CD8-positive, alpha-beta T cell (primary cell): ENCODE measurements at regions of chr15 and their contacts with region 1.

Region 1: GRCh38 chr15:75842722-75843551 is at the start of gene UBE2Q2:
- DNase-seq: peak; percentile 13 to 86 (median 75)
- ATAC-seq: peak; percentile 62
- H3K4me3 ChIP-seq: peak within 1 kb of the TSS; percentile 72 to 73
- H3K4me3 Mint-ChIP-seq: peak within 1 kb of the TSS; percentile 90
- H3K27ac ChIP-seq: peak within 1 kb of the TSS; percentile 58 to 59
- H3K27ac Mint-ChIP-seq: peak within 1 kb of the TSS; percentile 93
- H3K4me1 ChIP-seq: peaks cover 26% of the 10 kb centered on the region
- H3K4me1 Mint-ChIP-seq: peaks cover 45% of the 10 kb centered on the region
- H3K27me3 ChIP-seq: no peaks in the 10 kb centered on the region
- H3K27me3 Mint-ChIP-seq: no peaks in the 10 kb centered on the region
- CTCF ChIP-seq: no peak
- total RNA-seq, gene UBE2Q2: 28.5 to 30.4 TPM

Region 2: GRCh38 chr15:74956648-74957300 is 886.2 kb before region 1 on chr15 and contains the start of gene RPP25:
- CTCF ChIA-PET with region 1: no interaction called
- POLR2A ChIA-PET with region 1: no interaction called
- intact Hi-C with region 1: loop called in 1 of 2 experiments (anchors 10 kb)
- DNase-seq: peak; percentile 22 to 78 (median 66)
- ATAC-seq: peak; percentile 89
- H3K4me3 ChIP-seq: peak within 1 kb of the TSS; percentile 56 to 65
- H3K4me3 Mint-ChIP-seq: peak within 1 kb of the TSS; percentile 81
- H3K27ac ChIP-seq: no peak within 1 kb of the TSS
- H3K27ac Mint-ChIP-seq: no peak within 1 kb of the TSS
- H3K4me1 ChIP-seq: peaks cover 26% of the 10 kb centered on the region
- H3K4me1 Mint-ChIP-seq: peaks cover 30% of the 10 kb centered on the region
- H3K27me3 ChIP-seq: peaks cover 17 to 28% of the 10 kb centered on the region in 2 experiments
- H3K27me3 Mint-ChIP-seq: peaks cover 25% of the 10 kb centered on the region
- CTCF ChIP-seq: no peak
- total RNA-seq, gene RPP25: 0.22 to 0.28 TPM

Region 3: GRCh38 chr15:75738647-75739331 is 104.1 kb before region 1 on chr15:
- CTCF ChIA-PET with region 1: no interaction called
- POLR2A ChIA-PET with region 1: interaction called, 10 read pairs
- intact Hi-C with region 1: loop called (anchors 1 to 5 kb)
- DNase-seq: peak; percentile 70 to 92 (median 89)
- ATAC-seq: peak; percentile 91
- H3K4me3 ChIP-seq: peak overlapping the region; percentile 67 to 79
- H3K4me3 Mint-ChIP-seq: peak overlapping the region; percentile 84
- H3K27ac ChIP-seq: peak overlapping the region in 1 of 2 experiments; percentile 51
- H3K27ac Mint-ChIP-seq: peak overlapping the region; percentile 70
- H3K4me1 ChIP-seq: peaks cover 14% of the 10 kb centered on the region
- H3K4me1 Mint-ChIP-seq: peaks cover 14% of the 10 kb centered on the region
- H3K27me3 ChIP-seq: peaks cover 0 to 4% of the 10 kb centered on the region in 2 experiments
- H3K27me3 Mint-ChIP-seq: peaks cover 3% of the 10 kb centered on the region
- CTCF ChIP-seq: no peak

Region 4: DNA sequence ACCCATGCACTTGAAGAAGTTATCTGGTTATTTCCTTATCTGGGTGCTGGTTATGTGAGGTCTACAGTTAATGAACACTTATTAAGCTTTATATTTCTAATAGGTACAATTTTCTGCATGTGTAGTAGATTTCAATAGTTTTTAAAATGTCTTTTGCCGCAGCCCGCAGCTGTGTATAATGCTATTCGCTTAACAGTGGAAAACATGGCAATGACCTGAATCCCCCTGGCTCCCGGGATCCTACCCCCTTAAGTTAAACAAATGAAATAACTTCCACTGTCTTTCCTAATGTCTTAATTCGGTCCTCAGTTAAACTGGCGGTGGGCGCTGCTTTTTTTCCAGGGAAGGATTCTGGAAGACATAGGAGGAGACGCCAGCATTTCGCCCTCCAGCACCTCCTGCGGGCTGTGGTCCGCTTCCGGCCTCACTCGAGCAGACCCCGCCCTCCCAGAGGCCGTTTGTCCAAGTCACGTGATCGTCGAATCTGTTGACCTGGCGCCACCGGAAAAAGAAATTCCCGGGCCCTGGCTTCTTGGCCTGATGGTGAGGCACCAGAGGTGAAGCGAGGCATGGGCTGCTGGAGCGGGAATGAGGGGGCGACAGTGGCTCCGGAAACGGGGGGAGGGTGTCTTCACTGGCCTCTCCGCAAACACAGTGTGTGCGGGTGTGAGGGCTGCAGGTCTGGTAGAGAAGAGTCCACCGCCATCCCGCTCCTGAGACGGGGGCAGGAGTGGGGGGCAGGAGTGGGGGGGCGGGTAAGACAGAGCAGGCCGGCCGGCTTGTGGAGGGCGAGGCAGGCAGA is 84.7 kb before region 1 on chr15:
- CTCF ChIA-PET with region 1: no interaction called
- POLR2A ChIA-PET with region 1: no interaction called
- intact Hi-C with region 1: no loop called
- DNase-seq: peak in 8 of 9 experiments; percentile 29 to 80 (median 52)
- ATAC-seq: peak; percentile 66
- H3K4me3 ChIP-seq: peak overlapping the region; percentile 61 to 73
- H3K4me3 Mint-ChIP-seq: peak overlapping the region; percentile 82
- H3K27ac ChIP-seq: peak overlapping the region; percentile 26 to 58
- H3K27ac Mint-ChIP-seq: peak overlapping the region; percentile 67
- H3K4me1 ChIP-seq: no peaks in the 10 kb centered on the region
- H3K4me1 Mint-ChIP-seq: peaks cover 17% of the 10 kb centered on the region
- H3K27me3 ChIP-seq: no peaks in the 10 kb centered on the region
- H3K27me3 Mint-ChIP-seq: no peaks in the 10 kb centered on the region
- CTCF ChIP-seq: no peak

Region 5: DNA sequence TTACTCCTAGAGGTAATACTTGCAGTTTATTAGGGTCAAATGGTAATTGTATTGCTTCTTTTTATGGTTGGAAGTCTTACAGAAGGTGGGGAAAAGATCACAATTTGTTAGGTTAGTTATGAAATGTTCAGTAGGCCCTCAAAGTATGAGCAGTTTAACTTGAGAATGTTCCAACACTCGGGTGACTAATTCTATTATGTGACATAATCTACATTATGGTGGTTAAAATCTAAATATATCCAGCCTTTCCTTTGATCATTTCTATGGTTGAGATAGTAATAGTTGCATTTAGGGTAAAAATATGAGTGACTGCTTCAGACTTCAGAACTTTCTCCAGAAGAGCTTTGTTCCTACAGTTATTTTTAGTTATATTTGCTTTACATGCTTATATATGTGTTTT is 41.1 kb after region 1 on chr15:
- CTCF ChIA-PET with region 1: no interaction called
- POLR2A ChIA-PET with region 1: no interaction called
- intact Hi-C with region 1: loop called in 1 of 2 experiments (anchors 5 kb)
- DNase-seq: no peak
- ATAC-seq: no peak
- H3K4me3 ChIP-seq: no peak overlapping the region
- H3K4me3 Mint-ChIP-seq: no peak overlapping the region
- H3K27ac ChIP-seq: no peak overlapping the region
- H3K27ac Mint-ChIP-seq: no peak overlapping the region
- H3K4me1 ChIP-seq: no peaks in the 10 kb centered on the region
- H3K4me1 Mint-ChIP-seq: no peaks in the 10 kb centered on the region
- H3K27me3 ChIP-seq: no peaks in the 10 kb centered on the region
- H3K27me3 Mint-ChIP-seq: no peaks in the 10 kb centered on the region
- CTCF ChIP-seq: no peak

Region 6: DNA sequence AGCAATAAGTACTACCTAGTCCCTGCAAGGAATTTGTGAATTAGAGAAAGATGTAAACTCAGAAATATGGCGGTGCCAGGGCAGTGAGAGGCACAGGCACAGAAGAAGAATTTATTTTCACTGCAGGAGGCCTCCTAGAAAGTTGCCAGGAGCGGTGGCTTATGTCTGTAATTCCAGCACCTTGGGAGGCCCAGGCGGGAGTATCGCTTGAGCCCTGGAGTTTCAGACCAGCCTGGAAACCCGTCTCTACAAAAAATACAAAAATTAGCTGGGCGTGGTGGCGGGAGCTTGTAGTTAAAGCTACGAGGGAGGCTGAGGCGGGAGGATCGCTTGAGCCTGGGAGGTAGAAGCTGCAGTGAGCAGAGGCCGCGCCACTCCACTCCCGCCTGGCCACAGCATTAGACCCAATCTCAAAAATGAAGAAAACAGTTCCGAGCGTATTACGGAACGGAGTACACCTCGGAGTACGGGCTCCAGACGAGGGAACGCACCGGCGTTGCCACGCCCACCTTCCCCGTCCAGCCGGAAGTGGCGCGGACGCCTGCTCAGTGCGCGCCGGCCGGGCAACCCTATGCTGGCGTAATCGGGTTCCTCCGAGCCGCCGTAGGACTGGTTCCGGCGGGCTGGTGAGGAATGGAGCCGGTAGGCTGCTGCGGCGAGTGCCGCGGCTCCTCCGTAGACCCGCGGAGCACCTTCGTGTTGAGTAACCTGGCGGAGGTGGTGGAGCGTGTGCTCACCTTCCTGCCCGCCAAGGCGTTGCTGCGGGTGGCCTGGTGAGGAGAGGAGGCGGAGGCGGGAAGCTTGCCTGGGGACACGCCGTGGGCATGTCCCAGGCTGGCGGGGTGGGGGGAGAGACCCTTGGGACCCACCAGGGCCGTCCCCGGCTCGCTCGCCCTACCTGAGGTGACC is 60.6 kb after region 1 on chr15 and contains the start of gene FBXO22:
- CTCF ChIA-PET with region 1: interaction called, 3 read pairs
- POLR2A ChIA-PET with region 1: interaction called, 8 read pairs
- intact Hi-C with region 1: loop called (anchors 2 to 5 kb)
- DNase-seq: peak; percentile 78 to 93 (median 88)
- ATAC-seq: peak; percentile 90
- H3K4me3 ChIP-seq: peak within 1 kb of the TSS; percentile 83 to 84
- H3K4me3 Mint-ChIP-seq: peak within 1 kb of the TSS; percentile 98
- H3K27ac ChIP-seq: peak within 1 kb of the TSS; percentile 63 to 68
- H3K27ac Mint-ChIP-seq: peak within 1 kb of the TSS; percentile 95
- H3K4me1 ChIP-seq: peaks cover 19% of the 10 kb centered on the region
- H3K4me1 Mint-ChIP-seq: peaks cover 49% of the 10 kb centered on the region
- H3K27me3 ChIP-seq: no peaks in the 10 kb centered on the region
- H3K27me3 Mint-ChIP-seq: no peaks in the 10 kb centered on the region
- CTCF ChIP-seq: no peak
- total RNA-seq, gene FBXO22: 6.1 to 6.4 TPM